HEK293 (cell line): ENCODE measurements at regions of chr11 and their contacts with region 1.

Region 1: DNA sequence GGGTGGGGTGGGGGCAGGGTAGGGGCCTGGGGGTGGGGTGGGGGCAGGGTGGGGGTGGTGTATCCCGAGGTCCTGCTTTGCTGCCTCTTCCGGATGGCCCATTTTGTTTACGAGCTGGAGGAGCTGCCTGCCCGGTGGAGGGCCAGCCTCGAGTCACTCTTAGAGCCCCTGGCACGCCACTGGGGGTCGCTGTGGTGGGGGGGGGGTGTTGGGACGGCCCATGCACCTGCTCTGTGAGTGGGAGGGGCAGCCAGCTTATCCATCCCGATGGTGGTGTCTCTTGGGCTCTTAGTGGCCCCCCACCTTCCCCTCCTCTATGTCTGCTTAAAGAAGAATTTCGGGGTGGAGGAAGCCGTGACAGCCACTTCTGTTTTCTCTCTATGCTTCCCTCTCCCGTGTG is 24.6 kb downstream of the MRGPRD start:
- H3K4me3 ChIP-seq: no peak overlapping the region
- H3K27ac ChIP-seq: no peak overlapping the region
- H3K4me1 ChIP-seq: no peaks in the 10 kb centered on the region
- CTCF ChIP-seq: no peak

Region 2: DNA sequence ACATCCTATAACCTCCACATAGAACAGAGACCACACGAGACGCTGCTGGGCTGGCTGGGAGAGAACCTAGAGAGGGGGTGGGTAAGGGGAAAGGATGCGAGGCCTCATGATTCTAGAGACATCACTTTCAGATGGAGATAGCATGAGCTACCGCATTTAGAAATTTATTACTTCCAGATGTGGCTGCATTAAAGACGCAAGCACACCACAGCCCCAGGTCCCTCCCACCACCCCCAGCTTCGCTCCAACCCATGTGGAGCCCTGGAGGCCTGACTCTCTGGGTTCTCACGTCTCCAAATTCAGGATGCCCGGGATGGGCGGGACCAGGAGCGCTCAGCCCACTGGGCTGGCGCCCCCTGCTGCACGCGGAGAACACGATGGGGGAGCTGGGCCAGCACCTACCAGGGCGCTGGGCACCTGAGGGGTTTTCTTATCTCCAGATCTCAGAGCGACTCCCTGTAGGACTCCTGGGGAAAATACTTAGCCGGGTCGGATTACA is 66.1 kb before region 1 on chr11:
- CTCF ChIA-PET with region 1: no interaction called
- POLR2A ChIA-PET with region 1: no interaction called
- H3K4me3 ChIP-seq: no peak overlapping the region
- H3K27ac ChIP-seq: no peak overlapping the region
- H3K4me1 ChIP-seq: no peaks in the 10 kb centered on the region
- CTCF ChIP-seq: no peak

Region 3: DNA sequence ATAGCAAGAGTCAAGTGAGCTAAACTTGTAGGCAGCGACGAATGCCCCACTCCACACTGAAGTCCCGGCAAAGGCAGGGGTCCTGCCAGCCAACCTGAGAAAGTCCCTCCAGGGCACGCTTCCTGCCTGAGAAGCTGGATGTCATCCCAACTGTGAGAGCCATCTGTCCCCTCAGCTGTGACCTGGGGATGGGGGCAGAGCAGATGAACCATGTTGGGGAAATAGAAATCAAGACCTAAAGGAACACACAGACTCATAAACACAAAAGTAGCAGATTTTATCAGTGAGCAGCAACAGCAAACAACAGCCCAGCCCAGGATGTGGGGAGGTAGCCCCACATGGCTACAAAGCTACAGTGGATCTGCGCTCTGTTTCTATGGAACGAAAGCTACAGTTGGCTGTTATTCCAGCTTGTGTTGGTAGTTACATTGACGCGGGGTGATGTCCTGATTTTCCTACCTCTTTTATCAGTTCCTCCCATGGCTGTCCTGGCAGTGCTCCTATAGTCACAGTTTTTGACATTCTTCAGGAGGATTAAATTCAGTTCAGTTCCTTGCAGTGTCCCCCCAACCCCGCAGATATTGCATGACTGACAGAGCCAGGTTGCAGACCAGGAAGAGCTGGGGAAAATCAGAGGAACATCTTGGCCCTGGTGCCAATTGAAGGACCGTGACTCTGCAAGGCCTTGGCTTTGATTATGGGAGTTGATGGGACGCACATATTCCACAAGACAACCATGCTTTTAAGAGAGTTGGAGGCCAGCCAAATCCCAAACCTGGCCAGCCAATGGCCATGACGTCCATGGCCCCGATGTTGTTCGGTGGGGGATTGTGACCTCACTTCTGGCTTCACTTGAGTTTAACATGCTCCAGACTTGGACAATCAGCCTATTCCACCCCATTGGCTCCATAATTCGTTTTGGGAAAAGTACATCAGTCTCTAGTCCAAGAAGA is 10.0 kb after region 1 on chr11:
- CTCF ChIA-PET with region 1: interaction called, 10 read pairs
- POLR2A ChIA-PET with region 1: interaction called, 5 read pairs
- H3K4me3 ChIP-seq: no peak overlapping the region
- H3K27ac ChIP-seq: no peak overlapping the region
- H3K4me1 ChIP-seq: no peaks in the 10 kb centered on the region
- CTCF ChIP-seq: no peak